Activated CD4-positive, alpha-beta memory T cell treated with anti-CD3 and anti-CD28 coated beads, Interleukin-2, amount 10 ng/mL, durations not matched to agents 7 days and 5 days (primary cell): ENCODE measurements at regions of chr1 and their contacts with region 1.

Region 1: GRCh38 chr1:147640553-147641165 is 29.7 kb downstream of the ACP6 start:
- DNase-seq: peak; percentile 82
- H3K4me3 Mint-ChIP-seq: no peak overlapping the region
- H3K27ac Mint-ChIP-seq: no peak overlapping the region
- H3K4me1 Mint-ChIP-seq: peaks cover 61% of the 10 kb centered on the region
- H3K27me3 Mint-ChIP-seq: no peaks in the 10 kb centered on the region

Region 2: DNA sequence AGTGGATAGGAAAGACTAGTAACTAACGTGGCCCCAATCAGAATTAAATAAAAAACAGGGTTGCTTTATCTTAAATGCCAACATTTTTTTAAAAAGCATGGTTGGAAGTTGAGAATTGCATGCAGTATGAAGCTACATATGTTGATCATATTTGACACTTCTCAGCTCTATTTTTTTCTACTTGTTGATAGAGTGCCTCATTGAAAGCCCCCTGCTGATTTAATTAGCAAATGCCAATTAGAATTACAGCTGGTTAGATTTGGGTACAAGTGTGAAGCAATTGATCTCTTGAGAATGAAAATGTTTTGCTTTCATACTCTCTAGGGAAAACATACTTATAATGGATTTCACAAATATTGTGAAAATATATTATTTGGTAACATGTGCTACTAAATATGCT is 357.6 kb before region 1 on chr1:
- CTCF ChIA-PET with region 1: no interaction called
- POLR2A ChIA-PET with region 1: no interaction called
- DNase-seq: no peak
- H3K4me3 Mint-ChIP-seq: no peak overlapping the region
- H3K27ac Mint-ChIP-seq: no peak overlapping the region
- H3K4me1 Mint-ChIP-seq: no peaks in the 10 kb centered on the region
- H3K27me3 Mint-ChIP-seq: no peaks in the 10 kb centered on the region

Region 3: DNA sequence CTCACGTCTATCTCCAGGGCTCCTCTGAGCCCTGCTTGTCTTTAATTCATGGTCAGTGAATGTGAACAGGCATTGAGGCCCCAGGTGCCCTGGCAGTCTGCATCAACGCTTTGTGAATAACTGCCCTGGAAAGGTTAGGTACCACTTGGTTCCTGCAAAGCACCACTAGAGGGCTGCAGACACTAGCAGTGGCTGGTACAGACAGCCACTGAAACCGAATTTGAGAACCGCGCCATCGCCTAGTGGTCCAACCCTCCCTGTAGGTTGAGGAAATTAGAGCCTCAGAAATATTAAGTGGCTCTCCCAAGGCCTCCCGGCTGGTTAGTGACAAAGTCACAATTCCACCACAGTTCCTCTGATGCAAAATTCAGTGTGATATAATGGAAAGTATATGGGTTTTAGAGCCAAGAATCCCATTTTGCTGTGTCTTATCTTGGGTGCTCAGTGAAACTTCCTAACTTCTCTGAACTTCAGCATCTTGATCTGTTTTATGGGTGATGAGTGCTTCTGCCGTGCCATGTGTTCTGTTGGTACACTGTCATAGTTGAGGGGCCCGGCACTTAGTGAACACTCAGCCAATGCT is 145.6 kb before region 1 on chr1:
- CTCF ChIA-PET with region 1: interaction called, 12 read pairs
- POLR2A ChIA-PET with region 1: no interaction called
- DNase-seq: peak; percentile 76
- H3K4me3 Mint-ChIP-seq: no peak overlapping the region
- H3K27ac Mint-ChIP-seq: no peak overlapping the region
- H3K4me1 Mint-ChIP-seq: peaks cover 1% of the 10 kb centered on the region
- H3K27me3 Mint-ChIP-seq: peaks cover 7% of the 10 kb centered on the region

Region 4: GRCh38 chr1:147599362-147600118 is 41.1 kb before region 1 on chr1:
- CTCF ChIA-PET with region 1: interaction called, 10 read pairs
- POLR2A ChIA-PET with region 1: no interaction called
- DNase-seq: peak; percentile 95
- H3K4me3 Mint-ChIP-seq: peak overlapping the region; percentile 87
- H3K27ac Mint-ChIP-seq: no peak overlapping the region
- H3K4me1 Mint-ChIP-seq: peaks cover 27% of the 10 kb centered on the region
- H3K27me3 Mint-ChIP-seq: peaks cover 22% of the 10 kb centered on the region